Caco-2 (cell line): ENCODE measurements at regions of chr5 and their contacts with region 1.

Region 1: DNA sequence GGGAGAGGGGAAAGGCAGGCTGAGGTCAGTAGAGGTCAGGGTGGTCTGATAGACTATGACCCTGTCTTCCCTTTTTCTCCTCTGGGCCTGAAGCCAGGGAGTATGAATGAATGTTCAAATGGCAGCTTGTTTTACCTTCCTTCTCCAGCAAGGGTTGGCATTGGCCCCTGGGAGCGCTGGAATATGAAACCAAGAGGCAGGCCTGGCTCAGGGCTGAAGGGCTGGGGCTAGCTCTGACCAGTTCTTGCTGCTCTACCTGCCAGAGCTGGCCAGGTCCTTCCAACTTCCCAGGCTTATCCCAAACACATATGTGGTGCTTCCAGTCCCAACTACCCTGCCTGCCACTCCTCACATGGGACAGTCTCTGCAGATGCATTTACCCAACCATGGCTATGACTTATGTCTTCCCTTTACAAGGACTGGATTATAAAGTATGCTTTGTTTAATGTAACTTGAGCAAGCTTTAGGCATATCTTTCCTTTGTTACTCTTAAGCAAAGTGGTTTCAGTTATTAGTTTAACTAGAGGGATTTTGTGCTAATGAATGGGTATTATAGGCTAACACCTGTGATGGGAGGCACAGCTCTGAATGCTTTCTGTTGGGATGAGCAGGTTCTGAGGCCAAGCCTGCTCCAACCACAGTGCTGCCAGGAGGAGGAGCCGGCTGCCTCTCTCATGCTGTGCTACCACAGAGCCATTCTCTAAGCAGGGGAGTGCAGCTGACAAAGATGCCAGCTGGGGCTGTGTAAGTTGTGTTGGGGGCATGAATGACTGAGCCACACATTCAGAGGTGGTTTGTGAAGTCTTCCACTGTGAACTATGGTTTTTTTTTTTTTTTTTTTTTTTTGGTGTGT is 6.1 kb downstream of the CCNI2 start:
- DNase-seq: peak in 1 of 2 experiments; percentile 42
- H3K4me3 ChIP-seq: no peak overlapping the region
- H3K4me3 Mint-ChIP-seq: no peak overlapping the region
- H3K27ac Mint-ChIP-seq: no peak overlapping the region
- H3K4me1 ChIP-seq: no peaks in the 10 kb centered on the region
- H3K4me1 Mint-ChIP-seq: peaks cover 6% of the 10 kb centered on the region
- H3K27me3 ChIP-seq: no peaks in the 10 kb centered on the region
- H3K27me3 Mint-ChIP-seq: no peaks in the 10 kb centered on the region
- CTCF ChIP-seq: peak in 1 of 2 experiments; percentile 36

Region 2: DNA sequence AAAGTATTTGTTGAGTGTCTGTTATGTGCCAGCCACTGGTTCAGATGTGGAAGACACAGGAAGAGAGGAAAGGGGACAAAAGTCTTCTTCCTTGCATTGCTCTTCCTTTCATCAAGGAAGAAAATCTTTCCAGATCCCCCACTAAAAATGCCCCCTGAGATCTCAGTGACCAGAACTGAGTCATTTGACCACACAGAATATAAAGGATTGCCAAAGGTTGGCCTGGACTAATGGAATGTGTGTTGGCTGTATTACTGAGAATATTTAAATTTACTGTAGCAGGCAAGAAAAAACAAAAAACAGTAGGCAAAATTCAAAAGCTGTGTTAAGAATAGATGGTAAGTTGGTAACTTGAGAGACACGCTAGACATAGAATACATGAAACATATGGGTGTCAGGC is 33.7 kb after region 1 on chr5:
- CTCF ChIA-PET with region 1: no interaction called
- POLR2A ChIA-PET with region 1: no interaction called
- intact Hi-C with region 1: no loop called
- DNase-seq: no peak
- H3K4me3 ChIP-seq: no peak overlapping the region
- H3K4me3 Mint-ChIP-seq: no peak overlapping the region
- H3K27ac Mint-ChIP-seq: no peak overlapping the region
- H3K4me1 ChIP-seq: 0 out of 2 replicates have a peak, but pooled peaks cover 10% of the 10 kb centered on the region
- H3K4me1 Mint-ChIP-seq: peaks cover 7% of the 10 kb centered on the region
- H3K27me3 ChIP-seq: no peaks in the 10 kb centered on the region
- H3K27me3 Mint-ChIP-seq: no peaks in the 10 kb centered on the region
- CTCF ChIP-seq: no peak

Region 3: DNA sequence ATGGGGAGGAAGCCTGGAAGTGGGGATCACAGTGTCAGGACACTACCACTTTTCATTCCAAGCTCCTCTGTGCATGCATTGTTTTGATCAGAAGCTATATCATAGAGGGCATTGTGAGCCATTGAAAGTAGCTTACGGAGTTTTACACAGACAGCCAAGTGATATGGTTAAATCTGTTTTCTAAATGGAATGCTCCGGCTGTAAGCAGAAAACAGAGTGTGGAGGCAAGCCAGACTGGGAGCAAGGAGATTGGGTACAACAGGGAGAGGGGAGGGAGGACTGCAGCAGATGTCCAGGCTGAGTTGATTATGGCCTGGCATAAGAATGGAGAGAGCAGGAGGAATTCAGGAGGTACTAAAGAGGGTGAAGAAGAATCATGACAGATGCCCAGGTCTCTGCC is 44.3 kb after region 1 on chr5:
- CTCF ChIA-PET with region 1: interaction called, 14 read pairs
- POLR2A ChIA-PET with region 1: no interaction called
- intact Hi-C with region 1: no loop called
- DNase-seq: no peak
- H3K4me3 ChIP-seq: no peak overlapping the region
- H3K4me3 Mint-ChIP-seq: no peak overlapping the region
- H3K27ac Mint-ChIP-seq: no peak overlapping the region
- H3K4me1 ChIP-seq: peaks cover 22% of the 10 kb centered on the region
- H3K4me1 Mint-ChIP-seq: peaks cover 13% of the 10 kb centered on the region
- H3K27me3 ChIP-seq: no peaks in the 10 kb centered on the region
- H3K27me3 Mint-ChIP-seq: no peaks in the 10 kb centered on the region
- CTCF ChIP-seq: no peak

Region 4: DNA sequence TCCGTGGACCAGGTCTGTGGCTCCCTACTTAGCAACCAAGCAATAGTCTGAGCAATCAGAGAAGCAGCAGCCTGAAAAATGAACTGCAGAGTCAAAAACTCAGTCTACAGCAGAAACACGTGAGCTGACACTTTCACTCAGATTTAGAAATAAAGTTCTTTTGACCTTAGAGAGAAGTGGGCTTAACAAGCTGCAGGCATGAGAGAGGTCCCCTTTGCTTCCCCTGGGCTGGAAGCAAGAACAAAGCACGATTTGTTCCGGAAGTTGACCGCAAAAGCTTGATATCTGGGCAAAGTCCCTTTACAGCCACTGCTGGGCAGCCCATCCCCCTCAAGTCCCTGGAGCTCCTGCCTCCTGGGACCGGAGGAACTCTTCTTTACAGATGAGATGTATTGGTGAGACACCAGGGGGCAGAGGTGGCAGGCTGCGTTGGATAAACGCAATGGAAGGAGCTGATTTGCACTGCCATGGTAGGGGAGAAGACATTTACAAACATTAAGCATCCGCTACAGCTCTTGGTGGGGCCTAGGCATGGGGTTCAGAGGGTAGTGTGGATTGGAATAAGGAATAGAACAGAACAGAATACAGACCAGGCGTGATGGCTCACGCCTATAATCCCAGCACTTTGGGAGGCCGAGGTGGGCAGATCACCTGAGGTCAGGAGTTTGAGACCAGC is 53.9 kb after region 1 on chr5:
- CTCF ChIA-PET with region 1: interaction called, 30 read pairs
- POLR2A ChIA-PET with region 1: interaction called, 5 read pairs
- intact Hi-C with region 1: no loop called
- DNase-seq: peak; percentile 87 to 94
- H3K4me3 ChIP-seq: peak overlapping the region; percentile 8
- H3K4me3 Mint-ChIP-seq: peak overlapping the region; percentile 45
- H3K27ac Mint-ChIP-seq: peak overlapping the region; percentile 20
- H3K4me1 ChIP-seq: peaks cover 13% of the 10 kb centered on the region
- H3K4me1 Mint-ChIP-seq: peaks cover 16% of the 10 kb centered on the region
- H3K27me3 ChIP-seq: no peaks in the 10 kb centered on the region
- H3K27me3 Mint-ChIP-seq: no peaks in the 10 kb centered on the region
- CTCF ChIP-seq: peak; percentile 44 to 75

Region 5: DNA sequence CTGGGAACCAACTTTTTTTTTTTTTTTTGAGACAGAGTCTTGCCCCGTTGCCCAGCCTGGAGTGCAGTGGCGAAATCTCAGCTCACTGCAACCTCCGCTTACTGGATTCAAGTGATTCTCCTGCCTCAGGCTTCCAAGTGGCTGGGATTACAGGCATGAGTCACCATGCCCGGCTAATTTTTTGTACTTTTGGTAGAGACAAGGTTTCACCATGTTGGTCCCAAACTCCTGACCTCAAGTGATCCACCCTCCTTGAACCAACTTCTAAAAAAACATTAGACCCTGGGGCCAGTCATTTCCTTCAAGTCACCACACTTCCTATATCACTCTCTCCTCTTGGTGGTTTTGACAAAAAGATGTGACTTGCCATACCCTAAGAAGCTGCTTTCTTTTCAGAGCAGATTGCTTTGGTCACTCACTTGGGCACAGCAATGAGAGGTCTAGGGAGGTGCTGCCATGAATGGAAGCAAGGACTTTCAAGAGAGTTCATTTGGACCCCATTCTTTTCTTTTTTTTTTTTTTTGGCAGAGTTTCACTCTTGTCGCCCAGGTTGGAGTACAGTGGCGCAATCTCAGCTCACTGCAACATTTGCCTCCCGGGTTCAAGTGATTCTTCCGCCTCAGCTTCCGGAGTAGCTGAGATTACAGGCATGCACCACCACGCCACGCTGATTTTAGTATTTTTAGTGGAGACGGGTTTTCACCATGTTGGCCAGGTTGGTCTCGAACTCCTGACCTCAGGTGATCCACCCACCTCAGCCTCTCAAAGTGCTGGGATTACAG is 88.1 kb after region 1 on chr5:
- CTCF ChIA-PET with region 1: no interaction called
- POLR2A ChIA-PET with region 1: no interaction called
- intact Hi-C with region 1: no loop called
- DNase-seq: no peak
- H3K4me3 ChIP-seq: no peak overlapping the region
- H3K4me3 Mint-ChIP-seq: no peak overlapping the region
- H3K27ac Mint-ChIP-seq: no peak overlapping the region
- H3K4me1 ChIP-seq: peaks cover 37% of the 10 kb centered on the region
- H3K4me1 Mint-ChIP-seq: peaks cover 35% of the 10 kb centered on the region
- H3K27me3 ChIP-seq: no peaks in the 10 kb centered on the region
- H3K27me3 Mint-ChIP-seq: no peaks in the 10 kb centered on the region
- CTCF ChIP-seq: no peak

Region 6: DNA sequence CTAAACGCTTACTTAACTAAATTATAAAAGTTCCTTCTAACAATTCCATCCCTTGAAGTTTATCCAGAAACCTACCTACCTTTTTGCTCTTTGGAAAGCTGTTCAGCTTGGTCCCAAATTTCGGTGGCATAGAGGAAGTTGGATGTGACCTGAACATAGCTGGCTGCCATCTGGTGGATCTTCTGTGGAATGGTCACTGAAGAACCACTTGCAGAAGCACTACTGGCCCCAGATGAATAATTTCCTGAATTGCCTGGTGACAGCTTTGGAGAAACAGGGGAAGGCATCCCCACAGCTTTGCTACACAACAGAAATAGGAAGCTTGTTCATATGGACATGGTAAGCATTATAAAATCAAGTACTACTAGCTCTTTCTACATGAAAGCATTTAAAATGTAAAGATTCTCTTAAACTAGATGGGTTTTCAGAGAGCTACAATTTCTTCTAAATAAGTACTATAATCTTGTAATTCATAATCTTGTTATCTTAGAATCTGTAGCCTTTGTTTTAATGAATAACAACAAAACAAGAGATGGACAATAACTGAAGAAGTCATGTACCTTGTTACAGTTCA is 130.0 kb after region 1 on chr5:
- CTCF ChIA-PET with region 1: interaction called, 10 read pairs
- POLR2A ChIA-PET with region 1: no interaction called
- intact Hi-C with region 1: loop called (anchors 5 kb)
- DNase-seq: peak; percentile 70 to 74
- H3K4me3 ChIP-seq: no peak overlapping the region
- H3K4me3 Mint-ChIP-seq: no peak overlapping the region
- H3K27ac Mint-ChIP-seq: no peak overlapping the region
- H3K4me1 ChIP-seq: no peaks in the 10 kb centered on the region
- H3K4me1 Mint-ChIP-seq: peaks cover 14% of the 10 kb centered on the region
- H3K27me3 ChIP-seq: no peaks in the 10 kb centered on the region
- H3K27me3 Mint-ChIP-seq: no peaks in the 10 kb centered on the region
- CTCF ChIP-seq: peak; percentile 31 to 81